Breast epithelium (tissue), 4 donors: ENCODE measurements at regions of chr1 and their contacts with region 1.

Region 1: DNA sequence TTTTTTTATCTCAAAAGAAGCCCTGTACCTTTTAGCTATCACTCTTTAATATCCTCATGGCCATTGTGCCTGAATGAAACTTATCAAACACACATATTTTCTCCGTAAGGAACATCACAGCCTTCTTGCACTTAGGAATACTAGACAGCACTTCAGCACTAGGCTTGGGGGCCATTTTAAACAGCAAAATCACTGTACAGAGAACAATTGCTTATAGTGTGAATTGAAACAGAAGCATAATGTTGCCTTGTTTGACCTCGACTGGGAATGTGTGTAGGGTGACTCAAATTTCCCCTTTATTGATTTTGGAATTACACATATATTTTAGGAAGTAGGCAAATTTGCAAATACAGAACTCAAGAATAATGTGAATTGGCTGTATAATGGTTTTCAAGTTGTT is 36.4 kb downstream of the KYAT3 start:
- DNase-seq: no peak
- H3K4me3 ChIP-seq: no peak overlapping the region
- H3K27ac ChIP-seq: no peak overlapping the region
- H3K4me1 ChIP-seq: no peaks in the 10 kb centered on the region
- H3K27me3 ChIP-seq: no peaks in the 10 kb centered on the region
- CTCF ChIP-seq: no peak
- POLR2A ChIP-seq: no peak

Region 2: GRCh38 chr1:88998716-88999115 is 42.7 kb after region 1 on chr1:
- intact Hi-C with region 1: no loop called
- DNase-seq: no peak
- H3K4me3 ChIP-seq: no peak overlapping the region
- H3K27ac ChIP-seq: no peak overlapping the region
- H3K4me1 ChIP-seq: peaks cover 0 to 10% of the 10 kb centered on the region in 2 donors
- H3K27me3 ChIP-seq: no peaks in the 10 kb centered on the region
- CTCF ChIP-seq: peak; percentile 68 to 78 (median 74)
- POLR2A ChIP-seq: no peak

Region 3: DNA sequence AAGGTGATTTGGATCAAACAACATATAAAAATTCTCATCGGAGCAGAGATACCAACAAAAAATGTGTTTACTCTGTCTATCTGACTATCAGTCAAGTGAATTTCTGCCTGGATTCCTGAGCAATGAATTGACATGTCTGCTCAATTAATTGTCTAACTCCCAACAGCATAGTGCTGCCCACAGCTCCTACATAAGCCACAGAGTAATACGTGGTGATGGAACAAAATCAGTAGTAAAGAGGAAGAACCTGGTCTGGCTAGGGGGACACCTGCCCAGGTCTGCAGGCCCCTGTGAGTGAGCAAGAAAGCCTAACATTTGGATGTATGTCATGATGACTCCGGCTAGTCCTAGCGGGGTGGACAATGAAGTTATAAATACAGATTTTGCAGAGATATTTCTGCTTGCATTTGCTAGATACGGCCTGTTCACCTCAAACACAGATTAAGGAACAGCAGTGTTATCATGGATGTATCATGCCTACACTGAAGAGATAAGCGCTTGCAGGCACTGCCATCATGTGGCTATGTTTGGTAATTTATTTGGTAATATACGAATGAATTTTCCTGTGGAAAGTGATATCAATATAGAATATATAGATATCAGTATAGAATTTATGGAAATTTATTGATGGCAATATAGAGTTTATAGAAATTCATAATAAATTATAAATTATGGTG is 499.0 kb after region 1 on chr1:
- intact Hi-C with region 1: loop called (anchors 5 kb)
- DNase-seq: no peak
- H3K4me3 ChIP-seq: no peak overlapping the region
- H3K27ac ChIP-seq: no peak overlapping the region
- H3K4me1 ChIP-seq: no peaks in the 10 kb centered on the region
- H3K27me3 ChIP-seq: no peaks in the 10 kb centered on the region
- CTCF ChIP-seq: peak; percentile 60 to 66 (median 60)
- POLR2A ChIP-seq: no peak